AG04450 (cell line): ENCODE measurements at regions of chr14 and their contacts with region 1.

Region 1: DNA sequence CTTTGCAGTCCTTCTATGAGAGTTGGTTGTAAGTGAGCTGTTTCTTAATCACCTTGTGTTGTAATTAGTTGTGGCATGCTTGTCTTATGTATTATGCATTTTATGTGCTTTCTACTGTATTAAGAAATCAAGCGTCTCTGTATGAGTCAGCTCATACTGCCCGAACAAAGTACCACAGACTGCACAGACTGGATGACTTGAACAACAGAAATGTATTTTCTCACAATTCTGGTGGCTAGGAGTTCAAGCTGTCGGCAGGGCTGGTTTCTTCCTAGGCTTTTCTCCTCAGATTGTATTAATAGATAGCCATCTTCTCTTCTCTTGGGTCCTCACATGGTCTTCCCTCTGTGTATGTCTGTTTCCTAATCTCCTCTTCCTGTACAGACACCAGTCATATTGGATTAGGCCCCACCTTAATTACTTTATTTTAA is 77.7 kb downstream of the FLRT2 start:
- DNase-seq: peak; percentile 49
- H3K4me3 ChIP-seq: no peak overlapping the region
- H3K27ac ChIP-seq: peak overlapping the region; percentile 73
- H3K27me3 ChIP-seq: no peaks in the 10 kb centered on the region
- CTCF ChIP-seq: no peak

Region 2: GRCh38 chr14:85562630-85563029 is 45.0 kb before region 1 on chr14:
- CTCF ChIA-PET with region 1: no interaction called
- POLR2A ChIA-PET with region 1: no interaction called
- DNase-seq: no peak
- H3K4me3 ChIP-seq: no peak overlapping the region
- H3K27ac ChIP-seq: no peak overlapping the region
- H3K27me3 ChIP-seq: no peaks in the 10 kb centered on the region
- CTCF ChIP-seq: no peak

Region 3: GRCh38 chr14:86915406-86915805 is 1307.7 kb after region 1 on chr14:
- CTCF ChIA-PET with region 1: interaction called, 10 read pairs
- POLR2A ChIA-PET with region 1: no interaction called
- DNase-seq: no peak
- H3K4me3 ChIP-seq: no peak overlapping the region
- H3K27ac ChIP-seq: no peak overlapping the region
- H3K27me3 ChIP-seq: no peaks in the 10 kb centered on the region
- CTCF ChIP-seq: no peak